ENCODE measurements at regions of chr3 and their contacts with region 1.

Region 1: DNA sequence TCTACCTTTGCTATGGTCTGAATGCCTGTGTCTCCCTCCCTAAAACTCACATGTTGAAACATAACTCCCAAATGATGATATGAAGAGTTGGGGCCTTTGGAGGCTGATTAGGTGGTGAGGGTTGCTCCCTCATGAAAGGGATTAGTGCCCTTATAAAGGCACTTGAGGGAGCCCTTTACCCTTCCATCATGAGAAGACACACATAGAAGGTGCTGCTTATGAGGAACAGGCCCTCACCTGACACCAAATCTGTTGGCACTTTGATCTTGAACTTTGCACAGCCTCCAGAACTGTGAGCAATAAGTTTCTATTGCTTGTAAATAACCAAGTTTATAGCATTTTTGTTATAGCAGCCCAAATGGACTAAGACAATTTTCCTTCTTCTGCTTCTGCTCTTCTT is 76.2 kb upstream of the ADAMTS9 start:
- DNase-seq: no peak
- H3K4me3 ChIP-seq: no peak overlapping the region
- H3K27ac ChIP-seq: no peak overlapping the region
- H3K4me1 ChIP-seq: peaks cover 0 to 8% of the 10 kb centered on the region in 2 donors
- H3K27me3 ChIP-seq: no peaks in the 10 kb centered on the region
- CTCF ChIP-seq: no peak
- POLR2A ChIP-seq: no peak

Region 2: GRCh38 chr3:65230256-65231139 is 466.5 kb after region 1 on chr3:
- intact Hi-C with region 1: loop called (anchors 5 kb)
- DNase-seq: no peak
- H3K4me3 ChIP-seq: no peak overlapping the region
- H3K27ac ChIP-seq: no peak overlapping the region
- H3K4me1 ChIP-seq: no peaks in the 10 kb centered on the region
- H3K27me3 ChIP-seq: no peaks in the 10 kb centered on the region
- CTCF ChIP-seq: no peak
- POLR2A ChIP-seq: no peak

Measured in uterus (tissue), 4 donors.